ENCODE measurements at regions of chrX and their contacts with region 1.

Region 1: DNA sequence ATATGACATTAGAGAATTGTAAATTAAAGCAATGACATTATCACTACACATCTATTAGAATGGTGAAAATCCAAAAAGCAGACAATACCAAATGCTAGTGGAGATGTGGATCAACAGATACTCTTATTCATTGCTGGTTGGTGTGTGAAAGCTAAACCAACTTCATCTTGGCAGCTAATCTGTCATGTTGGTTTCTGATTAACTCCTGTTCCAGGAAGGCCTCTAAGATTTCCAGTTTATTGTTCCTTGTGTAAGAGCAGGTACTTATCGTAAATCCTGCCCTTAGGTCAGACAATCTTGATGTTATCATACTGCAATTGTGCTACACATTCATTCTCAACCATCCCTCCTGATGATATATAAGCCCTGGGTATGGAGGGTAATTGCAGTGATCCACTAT is 809.0 kb upstream of the DIAPH2 start:
- DNase-seq: no peak
- H3K4me3 ChIP-seq: no peak overlapping the region
- H3K27ac ChIP-seq: no peak overlapping the region
- H3K4me1 ChIP-seq: no peaks in the 10 kb centered on the region
- H3K27me3 ChIP-seq: no peaks in the 10 kb centered on the region
- CTCF ChIP-seq: no peak

Region 2: DNA sequence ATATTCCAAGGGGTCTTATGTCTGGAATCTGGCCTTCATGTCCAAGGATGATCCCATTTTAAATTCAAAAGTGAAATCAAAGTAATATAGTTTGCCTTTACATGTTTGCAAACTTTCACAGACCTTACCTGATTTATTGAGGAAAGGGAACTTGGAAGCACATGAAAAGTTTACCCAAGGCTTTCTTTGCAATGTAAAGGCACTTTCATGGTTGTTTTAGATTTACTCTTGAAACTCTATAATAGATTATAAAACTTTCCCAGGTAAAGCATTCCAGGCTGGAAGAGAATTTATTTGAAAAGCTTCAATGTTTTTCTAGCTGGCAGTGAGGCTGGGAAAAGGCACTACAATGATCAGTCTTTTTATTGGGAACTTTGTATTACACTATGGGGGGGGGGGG is 33.8 kb before region 1 on chrX:
- CTCF ChIA-PET with region 1: interaction called, 16 read pairs
- POLR2A ChIA-PET with region 1: no interaction called
- intact Hi-C with region 1: no loop called
- DNase-seq: no peak
- H3K4me3 ChIP-seq: no peak overlapping the region
- H3K27ac ChIP-seq: no peak overlapping the region
- H3K4me1 ChIP-seq: no peaks in the 10 kb centered on the region
- H3K27me3 ChIP-seq: no peaks in the 10 kb centered on the region
- CTCF ChIP-seq: no peak

Region 3: GRCh38 chrX:95949628-95950027 is 74.0 kb after region 1 on chrX:
- CTCF ChIA-PET with region 1: no interaction called
- POLR2A ChIA-PET with region 1: no interaction called
- intact Hi-C with region 1: no loop called
- DNase-seq: no peak
- H3K4me3 ChIP-seq: no peak overlapping the region
- H3K27ac ChIP-seq: no peak overlapping the region
- H3K4me1 ChIP-seq: no peaks in the 10 kb centered on the region
- H3K27me3 ChIP-seq: no peaks in the 10 kb centered on the region
- CTCF ChIP-seq: no peak

Measured in PC-9 (cell line).